ENCODE measurements at regions of chr17 and their contacts with region 1.

Region 1: DNA sequence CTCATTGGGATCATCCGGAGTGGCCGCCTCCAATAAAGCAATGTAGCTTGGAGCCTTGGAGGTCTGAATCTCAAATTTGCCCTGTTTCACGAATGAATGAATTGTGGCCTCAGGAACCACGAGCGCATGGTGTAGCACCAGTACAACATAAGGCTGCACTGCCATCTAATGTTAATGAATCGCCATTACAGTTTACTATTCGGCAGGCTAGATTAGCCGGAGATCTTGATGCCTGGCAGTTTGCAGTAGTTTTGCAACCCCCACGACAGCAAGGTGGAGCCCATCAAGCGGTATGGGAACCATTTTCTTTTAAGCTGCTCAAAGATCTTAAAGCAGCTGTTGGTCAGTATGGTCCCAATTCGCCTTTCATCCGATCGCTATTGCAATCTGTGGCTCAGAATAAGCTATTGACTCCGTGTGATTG is 18.8 kb downstream of the ALOX15B start:
- H3K4me3 Mint-ChIP-seq: no peak overlapping the region
- H3K27ac Mint-ChIP-seq: no peak overlapping the region
- H3K4me1 Mint-ChIP-seq: peaks cover 40% of the 10 kb centered on the region
- H3K27me3 Mint-ChIP-seq: peaks cover 28% of the 10 kb centered on the region

Region 2: GRCh38 chr17:7912927-7913524 is 144.7 kb before region 1 on chr17:
- intact Hi-C with region 1: loop called (anchors 2 kb)
- H3K4me3 Mint-ChIP-seq: no peak overlapping the region
- H3K27ac Mint-ChIP-seq: peak overlapping the region; percentile 39
- H3K4me1 Mint-ChIP-seq: peaks cover 58% of the 10 kb centered on the region
- H3K27me3 Mint-ChIP-seq: no peaks in the 10 kb centered on the region

Region 3: GRCh38 chr17:8016632-8017478 is 40.8 kb before region 1 on chr17:
- intact Hi-C with region 1: loop called (anchors 5 kb)
- H3K4me3 Mint-ChIP-seq: peak overlapping the region; percentile 62
- H3K27ac Mint-ChIP-seq: peak overlapping the region; percentile 57
- H3K4me1 Mint-ChIP-seq: peaks cover 78% of the 10 kb centered on the region
- H3K27me3 Mint-ChIP-seq: peaks cover 38% of the 10 kb centered on the region

Region 4: DNA sequence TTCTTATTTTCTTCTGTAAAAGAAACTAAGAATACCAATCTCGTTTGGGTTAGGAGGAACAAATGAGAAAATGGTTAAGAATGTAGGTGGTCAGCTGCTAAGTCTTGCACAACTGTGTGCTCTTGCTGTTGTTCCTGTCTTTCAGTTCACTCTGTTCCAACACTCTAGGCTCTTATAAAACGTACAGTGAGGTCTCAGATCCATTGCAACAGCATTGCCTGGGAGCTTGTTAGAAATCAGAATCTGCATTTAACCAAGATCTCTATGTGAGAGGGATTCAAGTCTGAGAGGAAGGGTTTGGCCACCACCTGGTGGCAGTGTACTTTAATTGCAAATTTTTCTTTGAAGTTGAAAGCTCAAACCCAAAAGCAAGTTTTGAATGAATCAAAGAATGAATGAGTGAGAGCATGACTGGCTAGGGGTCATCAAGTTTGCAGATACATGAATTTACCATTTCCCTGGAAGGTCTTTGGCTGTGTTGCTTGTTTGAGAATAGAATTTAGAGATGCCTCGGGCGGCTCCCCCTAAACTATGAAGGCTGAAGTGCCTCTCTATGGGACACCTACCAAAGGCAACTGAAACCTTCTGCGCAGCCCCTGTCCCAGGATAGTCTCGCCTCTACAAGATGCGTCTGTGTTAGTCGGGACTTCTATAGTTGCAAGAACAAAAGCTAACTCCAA is 16.3 kb before region 1 on chr17:
- intact Hi-C with region 1: no loop called
- H3K4me3 Mint-ChIP-seq: no peak overlapping the region
- H3K27ac Mint-ChIP-seq: no peak overlapping the region
- H3K4me1 Mint-ChIP-seq: peaks cover 66% of the 10 kb centered on the region
- H3K27me3 Mint-ChIP-seq: peaks cover 21% of the 10 kb centered on the region

Region 5: DNA sequence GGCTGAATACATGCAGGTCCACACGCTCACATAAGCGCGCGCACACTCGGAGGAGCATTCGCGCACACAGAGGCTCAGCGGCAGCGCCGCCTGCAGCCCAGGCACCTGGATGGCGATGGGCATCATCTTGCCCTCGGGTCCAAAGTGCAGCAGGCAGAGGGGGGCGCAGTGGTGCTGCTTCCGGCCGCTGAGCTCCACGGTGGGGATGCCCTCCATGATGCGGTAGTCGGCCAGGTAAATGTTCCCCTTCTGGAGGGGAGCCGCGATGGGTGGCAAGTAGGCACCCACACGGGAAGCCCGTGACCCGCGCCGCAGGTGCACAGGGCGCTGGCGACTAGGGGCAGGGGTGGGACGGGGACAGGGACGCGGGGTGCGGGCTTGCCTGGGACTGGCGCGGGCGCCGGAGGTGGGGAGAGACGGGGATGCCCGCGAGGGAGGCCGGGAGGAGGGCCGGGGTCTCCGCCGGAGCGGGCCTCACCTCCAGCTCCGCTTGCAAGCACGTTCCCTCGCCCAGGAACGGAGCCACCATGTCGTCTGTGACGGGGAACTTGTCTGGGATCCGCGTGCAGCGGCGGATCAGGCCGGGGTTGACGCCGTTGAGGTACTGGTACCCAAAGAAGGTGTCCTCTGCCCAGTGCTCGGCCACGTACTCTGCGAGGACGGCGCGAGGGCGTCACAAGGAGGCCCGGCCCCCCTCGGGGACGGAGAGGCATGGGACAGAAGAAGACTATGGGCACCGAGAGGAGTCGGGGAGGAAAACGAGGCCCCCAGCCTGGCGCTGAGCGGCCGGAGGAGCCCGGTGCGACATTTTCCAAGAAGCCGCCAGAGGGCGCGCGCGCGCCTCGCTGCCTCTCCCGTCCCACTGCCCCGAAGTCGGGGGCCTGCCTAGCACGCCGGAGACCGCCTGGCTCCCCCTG is 21.8 kb after region 1 on chr17:
- intact Hi-C with region 1: loop called (anchors 1 kb)
- H3K4me3 Mint-ChIP-seq: peak overlapping the region; percentile 72
- H3K27ac Mint-ChIP-seq: no peak overlapping the region
- H3K4me1 Mint-ChIP-seq: peaks cover 22% of the 10 kb centered on the region
- H3K27me3 Mint-ChIP-seq: peaks cover 75% of the 10 kb centered on the region

Measured in dendritic cell treated with granulocyte-macrophage colony-stimulating factor and Interleukin-4, amounts not matched to agents 40 ng/mL and 50 ng/mL, for 4 days (primary cell).